ENCODE measurements at regions of chr1 and their contacts with region 1.

Region 1: DNA sequence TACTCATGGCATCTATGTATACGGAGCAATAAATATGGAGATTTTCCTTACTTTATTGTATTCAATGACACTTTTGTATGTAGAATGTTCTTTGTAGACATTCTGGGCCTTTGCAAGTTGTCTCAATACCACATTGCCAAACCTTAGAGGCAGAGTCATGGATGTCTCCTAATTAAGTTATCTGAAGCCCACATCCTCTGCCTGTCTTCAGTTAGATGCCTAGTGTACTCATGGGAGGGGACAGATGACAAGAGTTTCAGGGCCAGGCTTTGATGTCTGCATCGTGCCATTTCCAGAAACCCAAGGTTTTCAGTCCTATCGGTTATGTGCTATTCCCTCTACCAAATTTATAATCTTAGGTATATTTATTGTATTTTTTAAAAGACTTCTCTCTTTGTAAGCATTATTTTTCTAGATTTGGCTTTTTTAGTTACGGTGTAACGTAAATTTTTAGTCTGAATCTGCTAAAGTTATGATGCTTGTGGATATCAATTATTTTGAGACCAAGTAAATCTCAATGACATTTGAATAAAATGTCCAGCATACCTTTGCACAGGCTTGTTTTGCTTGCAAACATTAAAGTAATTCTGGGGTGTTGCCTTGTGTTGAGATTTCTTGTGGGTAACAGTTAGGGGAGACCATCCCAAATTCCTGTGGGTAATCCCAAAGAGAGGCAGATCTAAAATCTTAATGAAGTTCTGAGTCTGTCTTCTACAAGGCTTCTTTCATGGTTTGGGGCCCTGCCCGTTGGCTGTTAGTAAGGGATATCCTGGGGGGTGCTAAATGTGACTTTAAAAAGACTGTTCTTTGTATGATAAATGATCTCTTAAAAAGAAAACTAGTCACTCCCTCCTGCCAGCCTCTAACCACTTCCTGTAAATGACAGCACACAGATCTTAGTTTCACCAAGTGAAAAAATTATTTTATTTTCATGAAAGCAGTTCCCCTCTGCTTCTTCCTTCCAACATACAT is 8.0 kb upstream of the MACF1 start:
- DNase-seq: peak; percentile 81
- H3K4me3 Mint-ChIP-seq: peak overlapping the region; percentile 53
- H3K27ac Mint-ChIP-seq: peak overlapping the region; percentile 97
- H3K4me1 Mint-ChIP-seq: peaks cover 81% of the 10 kb centered on the region
- H3K27me3 Mint-ChIP-seq: no peaks in the 10 kb centered on the region

Region 2: GRCh38 chr1:39098546-39099250 is 97.8 kb before region 1 on chr1:
- CTCF ChIA-PET with region 1: interaction called, 36 read pairs
- intact Hi-C with region 1: loop called (anchors 1 kb)
- DNase-seq: peak; percentile 73
- H3K4me3 Mint-ChIP-seq: no peak overlapping the region
- H3K27ac Mint-ChIP-seq: no peak overlapping the region
- H3K4me1 Mint-ChIP-seq: peaks cover 21% of the 10 kb centered on the region
- H3K27me3 Mint-ChIP-seq: no peaks in the 10 kb centered on the region

Region 3: GRCh38 chr1:39214998-39215873 is 18.7 kb after region 1 on chr1:
- CTCF ChIA-PET with region 1: interaction called, 100 read pairs
- intact Hi-C with region 1: loop called (anchors 1 kb)
- DNase-seq: peak; percentile 64
- H3K4me3 Mint-ChIP-seq: peak overlapping the region; percentile 89
- H3K27ac Mint-ChIP-seq: peak overlapping the region; percentile 93
- H3K4me1 Mint-ChIP-seq: peaks cover 58% of the 10 kb centered on the region
- H3K27me3 Mint-ChIP-seq: no peaks in the 10 kb centered on the region

Region 4: GRCh38 chr1:39250460-39251240 is 54.1 kb after region 1 on chr1:
- CTCF ChIA-PET with region 1: interaction called, 257 read pairs
- intact Hi-C with region 1: no loop called
- DNase-seq: no peak
- H3K4me3 Mint-ChIP-seq: no peak overlapping the region
- H3K27ac Mint-ChIP-seq: peak overlapping the region; percentile 9
- H3K4me1 Mint-ChIP-seq: peaks cover 33% of the 10 kb centered on the region
- H3K27me3 Mint-ChIP-seq: no peaks in the 10 kb centered on the region

Region 5: GRCh38 chr1:39398278-39399021 is 201.9 kb after region 1 on chr1:
- CTCF ChIA-PET with region 1: interaction called, 3 read pairs
- intact Hi-C with region 1: loop called (anchors 2 kb)
- DNase-seq: peak; percentile 58
- H3K4me3 Mint-ChIP-seq: no peak overlapping the region
- H3K27ac Mint-ChIP-seq: peak overlapping the region; percentile 68
- H3K4me1 Mint-ChIP-seq: peaks cover 63% of the 10 kb centered on the region
- H3K27me3 Mint-ChIP-seq: no peaks in the 10 kb centered on the region

Region 6: DNA sequence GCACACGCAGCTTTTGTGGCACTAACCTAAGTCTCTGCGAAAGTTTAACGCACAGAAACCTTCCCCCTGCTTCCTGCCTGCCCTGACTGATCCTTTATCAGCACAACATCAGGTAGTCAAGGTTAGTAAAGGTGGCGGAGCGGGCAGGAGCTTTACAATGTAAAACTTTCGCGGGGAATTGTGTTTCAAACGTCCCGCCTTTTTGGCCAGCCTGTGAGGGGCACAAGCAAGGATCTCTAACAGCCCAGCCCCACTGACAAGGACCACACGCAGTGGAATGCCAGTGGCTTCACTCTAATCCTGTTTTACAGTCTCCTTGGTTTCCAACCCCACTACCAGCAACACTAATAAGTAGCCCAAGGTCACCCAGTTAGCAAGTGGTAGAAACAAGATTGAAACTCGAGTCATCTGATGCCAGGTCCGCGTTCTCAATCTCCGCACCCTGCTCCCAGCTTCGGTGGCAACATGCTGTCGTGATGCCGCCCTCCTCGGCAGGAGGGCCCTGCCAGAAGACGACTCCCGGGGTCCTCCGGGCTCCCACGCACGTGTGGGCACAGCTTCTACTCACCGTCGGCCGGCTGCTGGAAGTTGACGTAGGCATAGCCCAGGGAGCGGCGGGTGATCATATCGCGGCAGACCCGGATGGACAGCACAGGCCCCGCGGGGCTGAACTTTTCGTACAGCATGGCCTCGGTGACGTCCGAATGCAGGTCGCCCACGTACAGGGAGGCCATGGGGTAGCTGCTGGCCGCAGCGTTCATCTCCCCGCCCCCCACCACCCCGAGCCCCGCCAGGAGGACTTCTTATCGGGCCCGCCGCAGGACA is 378.9 kb after region 1 on chr1:
- CTCF ChIA-PET with region 1: interaction called, 6 read pairs
- intact Hi-C with region 1: loop called (anchors 2 kb)
- DNase-seq: peak; percentile 59
- H3K4me3 Mint-ChIP-seq: peak overlapping the region; percentile 84
- H3K27ac Mint-ChIP-seq: peak overlapping the region; percentile 91
- H3K4me1 Mint-ChIP-seq: peaks cover 42% of the 10 kb centered on the region
- H3K27me3 Mint-ChIP-seq: no peaks in the 10 kb centered on the region

Measured in activated naive CD4-positive, alpha-beta T cell treated with anti-CD3 and anti-CD28 coated beads for 36 hours (primary cell).